ENCODE measurements at regions of chr2 and their contacts with region 1.

Region 1: GRCh38 chr2:45156605-45157004 is 147.4 kb upstream of the SIX2 start:
- DNase-seq: no peak
- ATAC-seq: no peak
- H3K4me3 ChIP-seq: no peak overlapping the region
- H3K27ac ChIP-seq: no peak overlapping the region
- H3K4me1 ChIP-seq: no peaks in the 10 kb centered on the region
- H3K27me3 ChIP-seq: no peaks in the 10 kb centered on the region
- CTCF ChIP-seq: no peak

Region 2: DNA sequence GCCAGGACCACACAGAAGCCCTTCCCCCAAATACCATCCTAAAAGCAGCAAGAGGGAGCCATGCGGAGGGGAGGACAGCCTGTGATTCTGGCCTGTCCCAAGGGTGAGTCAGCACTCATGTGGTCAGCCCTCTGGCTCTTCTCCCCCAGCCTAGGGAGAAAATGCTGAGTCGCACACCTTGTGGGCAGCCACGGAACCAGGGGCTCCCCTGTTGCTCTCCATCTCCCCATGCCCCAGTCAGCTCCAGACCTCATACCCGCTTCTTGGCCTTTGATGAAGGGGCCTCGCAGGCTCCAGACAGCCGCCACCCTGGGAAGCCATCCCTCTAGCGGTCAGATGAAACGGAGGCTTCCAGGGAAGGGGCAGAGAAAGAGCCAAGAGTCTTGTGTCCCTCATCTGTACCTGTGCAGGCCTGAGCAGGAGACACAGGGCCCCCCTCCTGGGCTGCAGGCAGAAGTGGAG is 33.9 kb after region 1 on chr2:
- CTCF ChIA-PET with region 1: no interaction called
- POLR2A ChIA-PET with region 1: no interaction called
- intact Hi-C with region 1: no loop called
- DNase-seq: peak; percentile 56
- ATAC-seq: peak; percentile 86
- H3K4me3 ChIP-seq: no peak overlapping the region
- H3K27ac ChIP-seq: peak overlapping the region; percentile 23
- H3K4me1 ChIP-seq: peaks cover 9% of the 10 kb centered on the region
- H3K27me3 ChIP-seq: no peaks in the 10 kb centered on the region
- CTCF ChIP-seq: no peak

Region 3: DNA sequence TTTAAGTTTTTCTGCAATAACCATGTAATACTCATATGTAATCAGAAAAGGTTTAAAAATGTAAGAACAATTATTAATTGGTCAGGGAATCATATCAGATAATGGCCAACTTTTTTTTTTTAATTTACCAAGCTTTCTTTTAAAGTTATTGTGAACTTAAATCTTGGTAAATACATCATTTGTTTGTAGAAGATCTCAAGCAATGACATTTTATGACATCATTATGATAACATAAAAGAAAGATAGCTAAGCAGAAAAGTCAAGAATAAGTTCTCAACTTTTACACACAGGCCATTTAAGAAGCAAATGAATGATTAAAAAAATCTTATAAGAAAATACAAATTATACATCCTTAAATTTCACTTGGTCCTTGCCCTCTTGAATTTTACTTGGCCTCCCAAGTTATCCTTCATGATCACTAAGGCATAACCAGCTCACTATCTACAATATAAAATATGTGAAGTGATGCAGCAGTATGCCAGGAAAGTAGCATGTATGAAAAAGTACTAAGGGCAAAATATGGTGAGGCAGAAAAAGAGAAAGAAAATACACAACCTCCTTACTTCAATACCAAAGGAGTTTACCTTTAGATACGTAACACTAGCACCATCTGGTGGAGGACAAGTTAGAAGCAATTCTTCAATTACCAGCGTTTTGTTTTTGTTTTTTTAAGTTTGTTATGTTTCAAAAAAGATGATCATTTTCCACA is 337.8 kb after region 1 on chr2:
- CTCF ChIA-PET with region 1: interaction called, 12 read pairs
- POLR2A ChIA-PET with region 1: no interaction called
- intact Hi-C with region 1: no loop called
- DNase-seq: peak; percentile 83
- ATAC-seq: peak; percentile 40; the same call in 1 of the 2 replicates
- H3K4me3 ChIP-seq: no peak overlapping the region
- H3K27ac ChIP-seq: peak overlapping the region; percentile 38
- H3K4me1 ChIP-seq: peaks cover 5% of the 10 kb centered on the region
- H3K27me3 ChIP-seq: no peaks in the 10 kb centered on the region
- CTCF ChIP-seq: peak; percentile 89